A673 (cell line): ENCODE measurements at regions of chr11 and their contacts with region 1.

Region 1: GRCh38 chr11:59158206-59159068 is 13.5 kb upstream of the DTX4 start:
- DNase-seq: peak; percentile 87
- H3K4me3 ChIP-seq: no peak overlapping the region
- H3K27ac ChIP-seq: no peak overlapping the region
- H3K4me1 ChIP-seq: no peaks in the 10 kb centered on the region
- H3K27me3 ChIP-seq: no peaks in the 10 kb centered on the region
- CTCF ChIP-seq: peak; percentile 94

Region 2: DNA sequence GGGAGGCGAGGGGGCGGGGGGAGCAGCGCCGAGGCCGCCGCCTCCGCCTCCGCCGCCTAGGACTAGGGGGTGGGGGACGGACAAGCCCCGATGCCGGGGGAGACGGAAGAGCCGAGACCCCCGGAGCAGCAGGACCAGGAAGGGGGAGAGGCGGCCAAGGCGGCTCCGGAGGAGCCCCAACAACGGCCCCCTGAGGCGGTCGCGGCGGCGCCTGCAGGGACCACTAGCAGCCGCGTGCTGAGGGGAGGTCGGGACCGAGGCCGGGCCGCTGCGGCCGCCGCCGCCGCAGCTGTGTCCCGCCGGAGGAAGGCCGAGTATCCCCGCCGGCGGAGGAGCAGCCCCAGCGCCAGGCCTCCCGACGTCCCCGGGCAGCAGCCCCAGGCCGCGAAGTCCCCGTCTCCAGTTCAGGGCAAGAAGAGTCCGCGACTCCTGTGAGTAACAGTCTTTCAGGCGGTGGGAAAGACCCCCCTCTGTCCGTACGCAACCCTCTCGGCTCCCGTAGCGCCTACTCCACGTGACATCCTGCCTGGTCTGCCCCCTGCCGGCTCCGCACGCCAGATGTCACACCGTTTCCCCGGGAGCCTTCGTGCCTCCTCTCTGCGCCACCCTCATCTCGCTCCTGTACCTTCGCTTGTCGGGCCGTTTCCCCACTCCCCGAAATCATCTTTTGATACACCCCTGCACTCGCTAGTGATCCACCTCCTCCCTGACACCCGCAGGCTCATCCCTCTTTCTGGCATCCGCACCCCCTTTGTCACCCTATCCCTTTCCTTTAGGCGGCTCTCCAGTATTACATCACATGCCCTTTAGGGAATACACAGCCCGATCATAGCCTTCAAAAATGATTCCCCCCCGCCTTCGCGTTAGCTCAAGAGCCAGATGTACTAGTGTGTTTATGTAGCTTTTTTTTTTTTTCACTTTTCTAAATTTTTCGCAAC is 579.0 kb before region 1 on chr11:
- CTCF ChIA-PET with region 1: no interaction called
- POLR2A ChIA-PET with region 1: no interaction called
- intact Hi-C with region 1: loop called (anchors 10 kb)
- DNase-seq: peak; percentile 97
- H3K4me3 ChIP-seq: peak overlapping the region; percentile 67
- H3K27ac ChIP-seq: peak overlapping the region; percentile 100
- H3K4me1 ChIP-seq: peaks cover 22% of the 10 kb centered on the region
- H3K27me3 ChIP-seq: no peaks in the 10 kb centered on the region
- CTCF ChIP-seq: peak; percentile 78

Region 3: DNA sequence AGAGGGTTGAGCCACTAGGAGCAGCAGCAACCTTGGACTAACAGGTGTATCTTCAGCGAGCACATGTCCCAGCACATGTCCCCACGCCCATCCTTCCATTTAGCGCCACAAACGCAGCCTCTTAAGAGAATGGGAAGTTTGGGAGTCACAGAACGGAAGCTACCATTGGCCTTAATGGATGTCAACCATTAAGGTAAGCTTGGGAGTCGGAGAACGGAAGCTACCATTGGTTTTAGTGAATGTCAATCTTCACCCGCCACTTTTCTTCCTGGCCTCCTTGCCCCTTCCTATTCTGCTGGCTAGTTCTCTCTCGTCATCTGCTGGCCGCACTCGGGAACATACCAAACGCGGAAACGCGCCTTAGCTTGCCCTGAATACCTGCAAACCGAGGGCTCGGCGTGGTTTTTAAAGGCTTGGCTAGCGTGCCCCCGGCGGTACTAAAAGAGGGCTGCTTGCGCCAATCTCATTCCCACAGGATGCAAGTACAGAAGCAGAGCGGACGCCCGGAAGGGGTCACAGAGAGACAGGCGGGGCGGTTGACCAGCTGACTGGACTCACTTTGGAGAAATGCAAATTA is 194.8 kb before region 1 on chr11:
- CTCF ChIA-PET with region 1: no interaction called
- POLR2A ChIA-PET with region 1: no interaction called
- intact Hi-C with region 1: loop called (anchors 10 kb)
- DNase-seq: no peak
- H3K4me3 ChIP-seq: no peak overlapping the region
- H3K27ac ChIP-seq: no peak overlapping the region
- H3K4me1 ChIP-seq: no peaks in the 10 kb centered on the region
- H3K27me3 ChIP-seq: peaks cover 44% of the 10 kb centered on the region
- CTCF ChIP-seq: no peak

Region 4: GRCh38 chr11:59097113-59097708 is 61.2 kb before region 1 on chr11:
- CTCF ChIA-PET with region 1: interaction called, 4 read pairs
- POLR2A ChIA-PET with region 1: no interaction called
- intact Hi-C with region 1: loop called (anchors 2 kb)
- DNase-seq: peak; percentile 78
- H3K4me3 ChIP-seq: no peak overlapping the region
- H3K27ac ChIP-seq: no peak overlapping the region
- H3K4me1 ChIP-seq: no peaks in the 10 kb centered on the region
- H3K27me3 ChIP-seq: peaks cover 24% of the 10 kb centered on the region
- CTCF ChIP-seq: peak; percentile 72

Region 5: DNA sequence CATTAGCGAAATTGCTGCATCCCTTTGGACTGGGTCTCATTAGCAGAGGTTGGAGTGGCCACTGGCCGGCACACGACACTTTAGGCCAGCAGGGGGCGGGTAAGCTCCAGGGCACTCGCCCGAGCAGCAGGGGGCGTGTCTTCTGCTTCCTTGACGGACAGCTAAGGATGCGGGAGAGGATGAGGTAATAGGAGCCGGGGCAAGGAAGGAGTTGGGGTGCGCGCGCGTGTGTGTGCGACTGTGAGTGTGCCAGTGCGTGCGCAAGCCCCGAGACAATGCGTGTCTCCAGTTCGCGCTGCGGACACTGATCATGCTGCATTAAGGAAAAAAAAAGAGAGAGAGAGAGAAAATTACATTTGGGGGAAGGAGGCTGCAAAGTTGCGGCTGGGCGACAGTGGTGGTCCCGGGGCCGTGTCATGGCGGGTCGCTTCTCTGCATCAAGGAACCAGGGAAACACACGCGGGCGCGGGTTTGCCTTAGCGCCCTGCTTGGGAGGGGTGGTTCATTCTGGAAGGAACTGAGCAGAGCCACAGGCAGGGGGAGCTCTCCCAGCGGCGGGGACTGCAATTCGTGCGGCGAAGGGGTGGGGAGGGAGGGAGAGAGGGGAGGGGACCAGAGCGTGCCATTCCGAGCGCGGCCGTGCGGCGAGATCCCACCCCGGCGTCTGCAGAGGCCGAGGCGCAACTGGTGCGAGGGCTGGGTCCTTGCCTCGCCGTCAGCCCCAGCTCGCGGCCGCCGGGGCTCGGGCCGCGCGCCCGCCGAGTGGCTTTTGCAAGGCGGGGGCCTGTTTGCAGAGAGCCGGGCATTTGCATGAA is 13.3 kb after region 1 on chr11 and contains the start of gene DTX4:
- CTCF ChIA-PET with region 1: interaction called, 11 read pairs
- POLR2A ChIA-PET with region 1: no interaction called
- intact Hi-C with region 1: no loop called
- DNase-seq: peak; percentile 95
- H3K4me3 ChIP-seq: peak within 1 kb of the TSS; percentile 50
- H3K27ac ChIP-seq: peak within 1 kb of the TSS; percentile 47
- H3K4me1 ChIP-seq: peaks cover 22% of the 10 kb centered on the region
- H3K27me3 ChIP-seq: peaks cover 7% of the 10 kb centered on the region
- CTCF ChIP-seq: peak; percentile 90
- total RNA-seq, gene DTX4: 1.9 and 2.0 TPM in 2 replicates

Region 6: GRCh38 chr11:59243633-59244032 is 85.2 kb after region 1 on chr11:
- CTCF ChIA-PET with region 1: no interaction called
- POLR2A ChIA-PET with region 1: no interaction called
- intact Hi-C with region 1: no loop called
- DNase-seq: no peak
- H3K4me3 ChIP-seq: no peak overlapping the region
- H3K27ac ChIP-seq: no peak overlapping the region
- H3K4me1 ChIP-seq: no peaks in the 10 kb centered on the region
- H3K27me3 ChIP-seq: no peaks in the 10 kb centered on the region
- CTCF ChIP-seq: no peak